CD14-positive monocyte (primary cell): ENCODE measurements at regions of chr19 and their contacts with region 1.

Region 1: GRCh38 chr19:50777754-50778303 is 7.6 kb downstream of the GPR32 start:
- DNase-seq: no peak
- H3K4me3 ChIP-seq: no peak overlapping the region
- H3K4me3 Mint-ChIP-seq: peak overlapping the region in 1 of 2 donors; percentile 79
- H3K27ac ChIP-seq: no peak overlapping the region
- H3K27ac Mint-ChIP-seq: no peak overlapping the region
- H3K4me1 ChIP-seq: no peaks in the 10 kb centered on the region
- H3K4me1 Mint-ChIP-seq: peaks cover 9% of the 10 kb centered on the region
- H3K27me3 ChIP-seq: peaks cover 15 to 45% of the 10 kb centered on the region in 2 donors
- H3K27me3 Mint-ChIP-seq: peaks cover 61 to 79% (median 73%) of the 10 kb centered on the region in 3 donors
- CTCF ChIP-seq: no peak

Region 2: DNA sequence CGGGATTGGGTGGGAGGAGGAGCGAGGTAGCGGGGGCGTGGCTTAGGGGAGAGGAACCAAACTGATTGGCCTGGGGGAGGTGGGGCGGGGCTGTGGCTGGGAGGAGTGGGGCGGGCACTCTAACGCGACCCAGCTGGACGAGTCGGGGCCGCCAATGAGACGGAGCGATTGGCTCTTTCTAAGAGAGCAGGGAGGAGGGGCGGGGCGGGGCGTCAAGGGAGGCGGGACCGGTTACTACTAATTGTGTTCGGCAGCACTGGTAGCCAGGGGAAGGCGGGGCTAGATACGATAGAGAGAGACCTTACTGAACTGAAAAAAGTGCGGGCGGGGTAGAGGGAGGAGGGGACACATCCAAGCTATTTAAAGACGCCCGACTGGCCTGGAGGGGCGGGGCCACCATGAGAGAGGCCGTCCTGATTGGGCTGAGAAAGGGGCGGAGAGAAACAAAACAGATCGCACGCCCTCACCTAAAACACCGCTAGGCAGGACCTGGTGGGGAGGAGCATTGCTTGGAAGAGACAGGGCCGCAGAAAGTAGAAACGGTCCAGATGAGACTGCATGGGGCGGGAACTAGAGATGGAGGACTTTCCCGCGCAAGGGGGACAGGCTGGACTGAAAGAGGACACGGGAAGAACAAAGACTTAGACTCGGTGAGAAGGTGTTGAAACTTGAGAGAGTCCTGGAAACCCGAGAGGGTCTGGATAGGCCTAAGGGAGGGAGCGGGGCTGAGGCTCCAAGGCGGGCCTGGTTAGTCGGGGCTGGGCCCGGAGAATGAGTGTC is 448.5 kb before region 1 on chr19 and contains the start of gene KCNC3:
- intact Hi-C with region 1: no loop called
- DNase-seq: peak; percentile 100
- H3K4me3 ChIP-seq: peak within 1 kb of the TSS; percentile 47 to 83 (median 52)
- H3K4me3 Mint-ChIP-seq: peak within 1 kb of the TSS; percentile 76 to 90
- H3K27ac ChIP-seq: peak within 1 kb of the TSS; percentile 33 to 70
- H3K27ac Mint-ChIP-seq: peak within 1 kb of the TSS; percentile 86 to 96 (median 94)
- H3K4me1 ChIP-seq: peaks cover 70 to 83% of the 10 kb centered on the region in 2 donors
- H3K4me1 Mint-ChIP-seq: peaks cover 66% of the 10 kb centered on the region
- H3K27me3 ChIP-seq: peaks cover 19 to 26% of the 10 kb centered on the region in 2 donors
- H3K27me3 Mint-ChIP-seq: peaks cover 33 to 44% (median 39%) of the 10 kb centered on the region in 3 donors
- CTCF ChIP-seq: no peak
- polyA plus RNA-seq, gene KCNC3: 0.04 to 23.6 TPM in 2 of 3 donors, not detected in the other

Region 3: GRCh38 chr19:50357178-50358100 is 420.4 kb before region 1 on chr19:
- intact Hi-C with region 1: loop called in 1 of 2 experiments (anchors 5 kb)
- DNase-seq: peak; percentile 65 to 76 (median 66)
- H3K4me3 ChIP-seq: peak overlapping the region; percentile 61 to 74 (median 64)
- H3K4me3 Mint-ChIP-seq: peak overlapping the region; percentile 86 to 92
- H3K27ac ChIP-seq: peak overlapping the region; percentile 81 to 91
- H3K27ac Mint-ChIP-seq: peak overlapping the region; percentile 92 to 98 (median 97)
- H3K4me1 ChIP-seq: peaks cover 24 to 35% of the 10 kb centered on the region in 2 donors
- H3K4me1 Mint-ChIP-seq: peaks cover 36% of the 10 kb centered on the region
- H3K27me3 ChIP-seq: no peaks in the 10 kb centered on the region
- H3K27me3 Mint-ChIP-seq: peaks cover 3 to 20% (median 14%) of the 10 kb centered on the region in 3 donors
- CTCF ChIP-seq: peak; percentile 93

Region 4: GRCh38 chr19:50537762-50538230 is 240.0 kb before region 1 on chr19:
- intact Hi-C with region 1: loop called in 1 of 2 experiments (anchors 10 kb)
- DNase-seq: peak; percentile 42 to 66 (median 44)
- H3K4me3 ChIP-seq: no peak overlapping the region
- H3K4me3 Mint-ChIP-seq: no peak overlapping the region
- H3K27ac ChIP-seq: no peak overlapping the region
- H3K27ac Mint-ChIP-seq: no peak overlapping the region
- H3K4me1 ChIP-seq: no peaks in the 10 kb centered on the region
- H3K4me1 Mint-ChIP-seq: no peaks in the 10 kb centered on the region
- H3K27me3 ChIP-seq: no peaks in the 10 kb centered on the region
- H3K27me3 Mint-ChIP-seq: peaks cover 1 to 10% (median 7%) of the 10 kb centered on the region in 3 donors
- CTCF ChIP-seq: peak; percentile 80

Region 5: DNA sequence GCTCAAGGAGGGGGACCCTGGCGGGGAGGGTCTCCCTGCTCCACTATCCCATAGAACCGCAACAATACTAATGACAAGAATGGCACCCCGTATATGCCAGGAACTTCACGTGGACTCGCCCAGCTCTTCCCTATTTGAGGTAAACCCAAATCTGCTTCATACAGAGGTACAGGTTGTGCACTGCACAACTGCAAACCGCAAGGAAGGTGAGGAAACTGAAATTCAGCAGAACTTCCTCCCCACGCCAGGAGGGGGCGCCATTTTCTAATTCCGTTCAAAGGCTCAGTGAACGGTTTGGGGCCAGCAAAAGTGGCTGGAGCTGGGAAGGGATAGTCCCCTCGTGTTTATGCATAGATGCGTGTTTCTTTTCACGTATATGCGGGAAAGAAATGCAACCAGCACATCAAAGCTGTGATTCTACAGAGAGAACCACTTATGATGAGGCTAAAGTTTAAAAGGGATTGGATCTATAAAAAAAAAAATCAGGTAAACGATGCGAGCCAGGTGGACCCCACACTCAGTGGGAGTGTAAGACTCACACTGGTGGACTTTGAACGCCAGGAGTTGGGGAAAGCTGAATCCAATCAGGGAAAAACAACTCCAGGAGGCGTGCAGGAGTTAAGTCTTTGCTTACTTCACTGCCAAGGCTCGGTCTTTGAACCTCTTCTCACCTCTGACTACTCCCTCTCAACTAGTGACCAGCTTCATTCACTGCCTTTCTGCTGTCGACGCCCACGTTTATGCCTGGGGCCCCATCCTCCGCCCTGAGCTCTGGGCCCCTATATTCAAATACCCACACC is 108.3 kb before region 1 on chr19:
- intact Hi-C with region 1: loop called (anchors 2 to 10 kb)
- DNase-seq: peak; percentile 12 to 43 (median 25)
- H3K4me3 ChIP-seq: no peak overlapping the region
- H3K4me3 Mint-ChIP-seq: peak overlapping the region in 1 of 2 donors; percentile 83
- H3K27ac ChIP-seq: no peak overlapping the region
- H3K27ac Mint-ChIP-seq: no peak overlapping the region
- H3K4me1 ChIP-seq: no peaks in the 10 kb centered on the region
- H3K4me1 Mint-ChIP-seq: no peaks in the 10 kb centered on the region
- H3K27me3 ChIP-seq: peaks cover 25 to 66% of the 10 kb centered on the region in 2 donors
- H3K27me3 Mint-ChIP-seq: peaks cover 65 to 95% (median 74%) of the 10 kb centered on the region in 3 donors
- CTCF ChIP-seq: peak; percentile 86

Region 6: GRCh38 chr19:50705422-50706019 is 72.3 kb before region 1 on chr19:
- intact Hi-C with region 1: loop called in 1 of 2 experiments (anchors 10 kb)
- DNase-seq: peak; percentile 15 to 51 (median 20)
- H3K4me3 ChIP-seq: no peak overlapping the region
- H3K4me3 Mint-ChIP-seq: no peak overlapping the region
- H3K27ac ChIP-seq: no peak overlapping the region
- H3K27ac Mint-ChIP-seq: peak overlapping the region in 1 of 7 donors; percentile 50
- H3K4me1 ChIP-seq: no peaks in the 10 kb centered on the region
- H3K4me1 Mint-ChIP-seq: peaks cover 3% of the 10 kb centered on the region
- H3K27me3 ChIP-seq: peaks cover 0 to 22% of the 10 kb centered on the region in 2 donors
- H3K27me3 Mint-ChIP-seq: peaks cover 26 to 36% (median 35%) of the 10 kb centered on the region in 3 donors
- CTCF ChIP-seq: peak; percentile 69

Region 7: GRCh38 chr19:50724522-50725217 is 53.2 kb before region 1 on chr19:
- intact Hi-C with region 1: loop called in 1 of 2 experiments (anchors 5 kb)
- DNase-seq: peak; percentile 91 to 96 (median 96)
- H3K4me3 ChIP-seq: peak overlapping the region; percentile 51 to 78 (median 62)
- H3K4me3 Mint-ChIP-seq: peak overlapping the region; percentile 85 to 96
- H3K27ac ChIP-seq: peak overlapping the region in 1 of 2 donors; percentile 68
- H3K27ac Mint-ChIP-seq: peak overlapping the region; percentile 81 to 96 (median 93)
- H3K4me1 ChIP-seq: peaks cover 37 to 54% of the 10 kb centered on the region in 2 donors
- H3K4me1 Mint-ChIP-seq: peaks cover 56% of the 10 kb centered on the region
- H3K27me3 ChIP-seq: peaks cover 0 to 35% of the 10 kb centered on the region in 2 donors
- H3K27me3 Mint-ChIP-seq: peaks cover 40 to 77% (median 72%) of the 10 kb centered on the region in 3 donors
- CTCF ChIP-seq: peak; percentile 82

Region 8: DNA sequence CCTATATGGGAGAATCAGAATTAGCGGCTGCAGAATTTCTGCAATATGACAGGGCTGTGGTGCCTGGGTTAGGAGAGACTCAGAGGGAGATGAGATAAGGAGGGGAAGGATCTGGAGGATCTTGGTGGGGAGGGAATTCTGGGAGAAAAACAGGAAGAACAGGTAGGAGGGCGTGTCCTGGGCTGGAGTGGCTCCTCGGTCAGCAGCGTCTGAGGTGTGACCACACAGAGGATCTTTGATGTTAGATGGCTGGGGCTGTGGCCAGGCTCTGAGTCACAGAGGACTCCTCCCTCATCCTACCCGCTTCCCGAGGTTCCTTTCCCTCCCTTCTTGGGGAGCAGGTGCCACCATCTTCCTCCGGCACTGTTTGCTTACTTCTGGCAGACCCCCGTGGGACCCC is 197.9 kb after region 1 on chr19:
- intact Hi-C with region 1: no loop called
- DNase-seq: no peak
- H3K4me3 ChIP-seq: no peak overlapping the region
- H3K4me3 Mint-ChIP-seq: no peak overlapping the region
- H3K27ac ChIP-seq: no peak overlapping the region
- H3K27ac Mint-ChIP-seq: peak overlapping the region in 1 of 7 donors; percentile 14
- H3K4me1 ChIP-seq: no peaks in the 10 kb centered on the region
- H3K4me1 Mint-ChIP-seq: no peaks in the 10 kb centered on the region
- H3K27me3 ChIP-seq: peaks cover 0 to 3% of the 10 kb centered on the region in 2 donors
- H3K27me3 Mint-ChIP-seq: peaks cover 12 to 23% (median 15%) of the 10 kb centered on the region in 3 donors
- CTCF ChIP-seq: no peak